ENCODE measurements at regions of chr16 and their contacts with region 1.

Region 1: GRCh38 chr16:54929090-54930004 is 1.3 kb upstream of the IRX5 start:
- DNase-seq: peak; percentile 86
- CTCF ChIP-seq: no peak

Region 2: DNA sequence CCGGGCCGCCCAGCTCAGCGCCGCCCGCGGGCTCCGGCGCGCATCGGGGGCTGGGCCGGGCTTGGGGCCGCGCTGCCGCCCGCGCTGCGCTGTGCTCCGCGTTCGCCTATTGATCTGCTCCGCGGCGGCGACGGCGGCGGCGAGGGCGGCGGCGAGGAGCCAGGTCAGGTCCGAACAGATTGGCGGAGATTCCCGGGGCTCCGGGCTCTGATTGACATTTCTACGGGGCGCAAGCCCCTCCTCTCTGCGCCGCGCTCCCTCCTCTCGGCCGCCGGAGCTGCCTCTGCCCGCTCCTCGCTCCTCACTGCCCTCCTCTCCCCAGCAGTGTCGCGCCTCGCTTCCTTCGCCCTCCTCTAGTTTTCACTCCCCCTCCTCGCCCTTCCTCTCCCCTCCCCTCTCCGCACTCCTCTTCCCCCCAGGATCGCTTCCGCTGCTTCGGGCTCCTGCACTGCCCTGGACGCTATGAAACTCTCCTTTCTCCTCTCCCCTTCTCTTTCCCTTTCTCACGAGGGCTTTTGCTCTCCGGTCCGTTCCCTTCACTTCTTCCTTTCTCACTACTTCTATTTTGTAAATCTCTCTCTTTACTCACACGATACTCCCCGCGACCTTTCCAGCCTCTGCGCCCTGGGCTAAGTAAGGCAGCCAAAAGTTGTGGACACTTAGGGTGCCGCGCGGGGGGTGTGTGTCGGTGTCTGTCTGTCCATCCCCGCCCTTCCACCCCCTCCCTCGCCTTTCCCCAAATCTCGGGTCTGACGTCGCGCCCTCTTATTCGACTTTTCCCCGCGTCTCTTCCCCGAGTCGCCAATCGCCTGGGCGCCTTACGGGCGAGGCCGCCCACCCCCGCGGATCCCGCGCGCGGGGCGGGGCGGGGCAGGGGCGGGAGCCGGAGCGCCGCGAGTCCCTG is 643.0 kb before region 1 on chr16 and contains the start of gene IRX3:
- in situ Hi-C with region 1: loop called (anchors 25 kb)
- DNase-seq: peak; percentile 34
- CTCF ChIP-seq: no peak

Region 3: DNA sequence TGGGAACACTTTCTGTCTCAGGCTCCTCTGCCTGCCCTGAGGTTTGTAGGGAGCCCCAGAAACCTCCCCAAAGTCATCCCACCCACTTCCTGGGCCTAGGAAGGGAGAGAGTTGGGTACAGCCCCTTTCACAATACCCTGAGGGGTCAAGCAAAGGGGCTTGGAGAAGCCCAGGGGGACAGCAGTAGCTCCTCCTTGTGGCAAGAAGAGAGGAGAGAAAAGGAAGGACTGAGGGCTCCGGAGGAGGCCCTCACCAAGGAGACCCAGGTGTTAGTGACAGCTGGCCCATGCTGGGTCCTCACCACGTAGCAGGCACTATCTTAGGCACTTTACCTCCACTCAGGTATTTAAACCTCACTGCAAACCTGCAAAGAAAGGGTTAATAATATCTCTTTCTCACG is 114.2 kb after region 1 on chr16:
- in situ Hi-C with region 1: no loop called
- DNase-seq: no peak
- CTCF ChIP-seq: no peak

Region 4: GRCh38 chr16:55370762-55371482 is 441.6 kb after region 1 on chr16:
- in situ Hi-C with region 1: no loop called
- DNase-seq: no peak
- CTCF ChIP-seq: no peak